Activated CD8-positive, alpha-beta T cell treated with anti-CD3 and anti-CD28 coated beads, Interleukin-2, amount 10 ng/mL, durations not matched to agents 7 days and 5 days (primary cell): ENCODE measurements at regions of chr2 and their contacts with region 1.

Region 1: GRCh38 chr2:195533771-195534642 is 123.0 kb upstream of the SLC39A10 start:
- DNase-seq: peak; percentile 81
- ATAC-seq: peak; percentile 58
- H3K4me3 Mint-ChIP-seq: peak overlapping the region; percentile 98
- H3K27ac Mint-ChIP-seq: peak overlapping the region; percentile 100
- H3K4me1 Mint-ChIP-seq: peaks cover 83% of the 10 kb centered on the region
- H3K27me3 Mint-ChIP-seq: no peaks in the 10 kb centered on the region

Region 2: DNA sequence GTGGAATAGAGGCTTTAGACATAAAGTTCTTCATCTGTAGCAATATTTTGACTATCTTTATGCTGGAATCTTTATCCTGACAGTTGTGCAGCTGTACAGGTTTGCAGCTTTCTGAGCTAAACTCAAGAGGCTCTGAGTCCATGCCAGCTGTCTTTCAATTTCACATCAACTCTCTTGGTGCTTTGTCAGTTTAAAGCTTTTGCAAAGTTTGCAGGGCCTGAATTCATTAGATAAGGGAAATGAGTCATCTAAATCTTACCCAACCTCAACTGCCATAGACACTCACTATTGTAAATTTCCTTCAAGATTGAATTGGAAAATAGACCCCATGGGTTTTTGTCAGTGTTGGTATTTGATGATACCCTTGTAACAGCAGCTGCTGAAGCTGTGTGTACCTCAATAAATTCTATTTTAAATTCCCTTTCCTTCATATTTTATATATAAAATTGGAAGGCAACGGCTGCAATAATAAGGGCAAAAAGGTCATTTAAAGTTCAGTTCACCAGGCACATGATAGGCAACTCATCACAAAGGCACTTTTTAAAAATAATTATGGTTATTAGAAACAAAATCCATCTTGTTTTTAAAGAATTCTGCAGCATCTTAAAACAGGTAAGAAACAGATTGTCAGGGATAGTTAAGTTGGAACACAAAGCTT is 46.9 kb before region 1 on chr2:
- CTCF ChIA-PET with region 1: interaction called, 6 read pairs
- POLR2A ChIA-PET with region 1: interaction called, 16 read pairs
- DNase-seq: peak; percentile 49
- ATAC-seq: peak; percentile 92
- H3K4me3 Mint-ChIP-seq: peak overlapping the region; percentile 13
- H3K27ac Mint-ChIP-seq: peak overlapping the region; percentile 78
- H3K4me1 Mint-ChIP-seq: peaks cover 37% of the 10 kb centered on the region
- H3K27me3 Mint-ChIP-seq: no peaks in the 10 kb centered on the region

Region 3: GRCh38 chr2:195543902-195544894 is 10.2 kb after region 1 on chr2:
- CTCF ChIA-PET with region 1: interaction called, 13 read pairs
- POLR2A ChIA-PET with region 1: interaction called, 6 read pairs
- DNase-seq: no peak
- ATAC-seq: no peak
- H3K4me3 Mint-ChIP-seq: no peak overlapping the region
- H3K27ac Mint-ChIP-seq: peak overlapping the region; percentile 88
- H3K4me1 Mint-ChIP-seq: peaks cover 71% of the 10 kb centered on the region
- H3K27me3 Mint-ChIP-seq: no peaks in the 10 kb centered on the region

Region 4: DNA sequence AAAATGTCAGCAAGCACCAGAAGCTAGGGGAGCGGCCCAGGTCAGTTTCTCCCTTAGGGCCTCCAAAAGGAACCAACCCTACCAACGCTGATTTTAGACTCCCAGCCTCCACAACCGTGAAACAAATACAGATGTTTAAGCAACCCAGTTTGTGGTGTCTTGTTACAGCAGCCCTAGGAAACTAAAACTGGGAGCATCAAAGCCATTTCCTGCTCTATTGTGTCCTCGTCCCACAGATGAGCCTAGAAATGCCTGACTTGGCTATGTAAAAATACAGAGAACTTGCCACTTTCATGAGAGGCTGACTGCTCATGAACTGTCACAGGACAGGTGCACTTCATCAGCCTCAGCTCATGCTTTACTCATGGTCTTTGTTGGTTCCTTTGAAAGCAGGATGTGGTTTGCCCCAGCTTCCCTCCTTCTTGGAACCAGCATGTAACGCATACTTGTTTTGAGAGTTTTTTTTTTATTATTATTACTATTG is 25.5 kb after region 1 on chr2:
- CTCF ChIA-PET with region 1: interaction called, 115 read pairs
- POLR2A ChIA-PET with region 1: interaction called, 198 read pairs
- DNase-seq: peak; percentile 95
- ATAC-seq: peak; percentile 94
- H3K4me3 Mint-ChIP-seq: peak overlapping the region; percentile 52
- H3K27ac Mint-ChIP-seq: peak overlapping the region; percentile 98
- H3K4me1 Mint-ChIP-seq: peaks cover 72% of the 10 kb centered on the region
- H3K27me3 Mint-ChIP-seq: no peaks in the 10 kb centered on the region